PC-3 (cell line): ENCODE measurements at regions of chr11 and their contacts with region 1.

Region 1: DNA sequence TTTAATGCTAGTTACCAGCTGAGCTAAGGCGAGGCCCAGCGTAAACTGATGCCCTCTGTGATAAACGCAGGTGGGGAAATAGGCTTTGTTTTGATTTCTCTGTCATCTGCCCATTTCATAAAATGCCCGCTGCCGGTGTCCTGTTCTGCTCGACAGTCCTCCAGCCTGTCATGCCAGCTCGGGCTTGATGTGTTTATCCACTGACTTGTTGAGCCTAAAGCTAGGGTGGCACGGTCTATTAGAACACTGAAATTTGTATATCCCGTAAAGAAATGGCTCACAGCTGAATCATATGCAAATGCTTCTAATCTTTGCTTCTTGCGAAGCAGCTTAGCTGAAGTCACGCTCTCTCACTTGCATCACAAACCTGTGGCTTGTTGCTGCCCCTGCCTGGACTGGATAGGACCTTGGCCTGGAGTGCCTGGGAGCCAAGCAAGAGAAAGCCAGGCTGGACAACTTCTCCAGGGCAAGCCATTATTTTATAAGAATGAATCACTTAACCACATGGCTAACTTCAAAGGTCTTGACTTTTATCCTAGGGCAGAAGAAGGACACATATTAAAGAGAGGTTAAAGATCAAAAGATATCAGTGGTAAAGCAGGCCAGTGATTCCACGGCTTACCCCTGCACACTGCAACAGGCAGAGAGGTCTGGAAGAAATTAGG is 33.1 kb downstream of the EHF start:
- DNase-seq: peak; percentile 97
- ATAC-seq: peak; percentile 86
- H3K4me3 ChIP-seq: peak overlapping the region; percentile 3; the same call in 1 of the 2 replicates
- H3K27ac ChIP-seq: peak overlapping the region; percentile 99
- H3K4me1 ChIP-seq: peaks cover 52% of the 10 kb centered on the region
- H3K27me3 ChIP-seq: no peaks in the 10 kb centered on the region
- CTCF ChIP-seq: peak; percentile 49; the same call in 1 of the 2 replicates

Region 2: GRCh38 chr11:34585735-34586487 is 68.0 kb before region 1 on chr11:
- CTCF ChIA-PET with region 1: interaction called, 4 read pairs
- POLR2A ChIA-PET with region 1: interaction called, 5 read pairs
- intact Hi-C with region 1: loop called (anchors 1 kb)
- DNase-seq: peak; percentile 84
- ATAC-seq: peak; percentile 64
- H3K4me3 ChIP-seq: peak overlapping the region; percentile 19; the same call in 1 of the 2 replicates
- H3K27ac ChIP-seq: peak overlapping the region; percentile 60
- H3K4me1 ChIP-seq: peaks cover 25% of the 10 kb centered on the region
- H3K27me3 ChIP-seq: no peaks in the 10 kb centered on the region
- CTCF ChIP-seq: peak; percentile 83

Region 3: DNA sequence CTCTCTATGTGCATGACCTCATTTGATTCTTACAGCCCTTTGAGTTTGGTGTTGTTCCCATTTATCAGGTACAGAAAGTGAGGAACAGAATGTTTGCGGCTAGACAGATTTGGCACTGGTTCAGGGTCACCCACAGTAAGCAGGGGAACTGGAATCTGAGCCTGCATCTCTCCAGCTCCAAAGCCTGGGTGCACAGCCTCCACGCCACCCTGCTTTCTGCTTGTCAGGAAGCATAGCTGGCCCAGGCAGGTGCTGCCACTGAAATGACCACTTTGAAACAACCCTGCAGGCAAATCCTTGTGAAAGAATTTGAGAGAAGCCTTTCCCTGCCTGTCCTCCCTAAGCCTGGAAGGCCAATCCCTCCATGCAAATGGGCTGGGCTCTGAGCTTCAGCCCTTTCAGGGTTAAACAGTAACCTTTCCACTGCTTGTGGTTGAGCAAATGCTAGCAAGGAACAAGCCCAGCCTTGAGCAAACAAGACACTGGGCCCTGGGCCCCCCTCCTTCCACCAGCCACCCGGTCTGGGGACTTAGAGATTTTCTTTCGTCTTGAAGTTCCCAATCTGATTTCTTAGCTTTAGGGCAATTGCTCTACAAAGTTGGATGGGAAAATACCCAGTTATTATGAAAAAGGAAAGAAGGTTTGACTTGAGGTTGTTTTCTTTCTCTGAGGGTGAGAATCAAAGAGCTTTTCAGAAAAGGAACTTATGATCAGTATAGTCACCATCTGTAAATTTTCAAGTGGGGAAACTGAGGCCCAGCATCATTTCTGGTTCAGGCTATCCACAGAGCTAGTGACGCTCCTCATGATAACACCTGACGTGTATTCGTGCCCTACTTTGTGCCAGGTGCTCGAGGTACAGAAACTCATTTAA is 13.7 kb before region 1 on chr11:
- CTCF ChIA-PET with region 1: interaction called, 9 read pairs
- POLR2A ChIA-PET with region 1: interaction called, 16 read pairs
- intact Hi-C with region 1: loop called (anchors 1 kb)
- DNase-seq: peak; percentile 95
- ATAC-seq: peak; percentile 85
- H3K4me3 ChIP-seq: peak overlapping the region; percentile 20; the same call in 1 of the 2 replicates
- H3K27ac ChIP-seq: peak overlapping the region; percentile 97
- H3K4me1 ChIP-seq: peaks cover 70% of the 10 kb centered on the region
- H3K27me3 ChIP-seq: no peaks in the 10 kb centered on the region
- CTCF ChIP-seq: no peak

Region 4: DNA sequence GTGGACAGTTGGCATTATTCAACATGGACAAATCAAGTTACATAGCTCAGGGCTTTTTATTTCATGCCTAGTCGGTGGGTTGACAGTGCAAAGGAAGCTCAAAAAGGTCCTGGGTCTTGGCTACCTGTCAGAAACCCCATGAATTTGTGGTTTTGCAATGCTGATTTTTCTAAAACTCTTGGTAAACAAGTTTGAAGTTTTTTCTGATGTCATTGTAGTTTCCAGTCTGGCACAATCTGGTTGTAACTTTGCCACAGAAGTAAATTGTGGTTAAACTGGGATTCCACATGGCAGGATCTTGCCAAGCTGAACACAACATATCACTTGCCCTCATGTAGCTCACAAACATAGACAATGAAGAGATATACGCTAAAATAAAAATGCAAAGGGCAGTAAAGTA is 67.7 kb after region 1 on chr11:
- CTCF ChIA-PET with region 1: no interaction called
- POLR2A ChIA-PET with region 1: no interaction called
- intact Hi-C with region 1: loop called (anchors 2 kb)
- DNase-seq: peak; percentile 2
- ATAC-seq: no peak
- H3K4me3 ChIP-seq: no peak overlapping the region
- H3K27ac ChIP-seq: no peak overlapping the region
- H3K4me1 ChIP-seq: peaks cover 4% of the 10 kb centered on the region; the same call in 1 of the 2 replicates
- H3K27me3 ChIP-seq: no peaks in the 10 kb centered on the region
- CTCF ChIP-seq: no peak

Region 5: DNA sequence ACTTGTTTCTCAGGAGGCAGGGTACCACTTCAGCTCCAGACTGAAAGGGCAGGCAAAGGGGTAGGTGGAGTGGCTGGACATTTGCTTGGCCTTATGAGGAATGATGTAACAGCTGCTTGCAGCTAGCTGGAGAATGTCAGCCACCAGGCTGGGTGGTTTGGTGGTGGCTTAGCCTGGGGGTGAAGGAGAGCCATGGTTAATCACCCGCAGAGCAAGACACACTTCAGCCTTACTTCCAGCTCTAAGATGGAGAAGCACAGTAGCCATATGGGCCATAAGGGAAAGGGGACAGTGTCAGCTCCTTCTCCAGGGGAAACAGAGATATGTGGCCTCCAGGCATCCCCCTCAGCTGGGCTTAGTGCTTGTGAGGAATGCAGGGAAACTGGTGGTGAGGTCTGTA is 116.2 kb after region 1 on chr11:
- CTCF ChIA-PET with region 1: no interaction called
- POLR2A ChIA-PET with region 1: no interaction called
- intact Hi-C with region 1: no loop called
- DNase-seq: no peak
- ATAC-seq: no peak
- H3K4me3 ChIP-seq: no peak overlapping the region
- H3K27ac ChIP-seq: no peak overlapping the region
- H3K4me1 ChIP-seq: peaks cover 21% of the 10 kb centered on the region
- H3K27me3 ChIP-seq: no peaks in the 10 kb centered on the region
- CTCF ChIP-seq: no peak

Region 6: DNA sequence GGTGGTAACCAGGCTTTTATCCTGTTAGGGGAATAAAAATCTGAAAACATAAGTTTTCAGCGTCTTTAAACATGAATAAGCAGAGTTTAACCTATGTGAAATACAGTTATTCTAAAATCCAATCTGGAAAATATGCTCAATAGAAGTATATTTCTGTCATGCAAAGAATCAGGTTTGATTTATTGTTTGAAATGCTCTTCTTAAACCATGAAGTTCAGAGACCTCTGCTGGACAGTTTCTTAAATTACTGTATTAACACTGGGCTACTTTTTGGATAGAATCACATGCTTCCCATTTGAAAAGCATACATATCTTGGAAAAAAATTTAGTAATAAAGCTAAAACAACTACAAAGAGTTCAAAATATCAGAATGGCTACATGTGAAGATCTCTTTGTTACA is 236.9 kb after region 1 on chr11:
- CTCF ChIA-PET with region 1: interaction called, 6 read pairs
- POLR2A ChIA-PET with region 1: no interaction called
- intact Hi-C with region 1: loop called (anchors 1 kb)
- DNase-seq: peak; percentile 78
- ATAC-seq: peak; percentile 68; the same call in 1 of the 2 replicates
- H3K4me3 ChIP-seq: no peak overlapping the region
- H3K27ac ChIP-seq: peak overlapping the region; percentile 37
- H3K4me1 ChIP-seq: peaks cover 17% of the 10 kb centered on the region
- H3K27me3 ChIP-seq: no peaks in the 10 kb centered on the region
- CTCF ChIP-seq: peak; percentile 72

Region 7: DNA sequence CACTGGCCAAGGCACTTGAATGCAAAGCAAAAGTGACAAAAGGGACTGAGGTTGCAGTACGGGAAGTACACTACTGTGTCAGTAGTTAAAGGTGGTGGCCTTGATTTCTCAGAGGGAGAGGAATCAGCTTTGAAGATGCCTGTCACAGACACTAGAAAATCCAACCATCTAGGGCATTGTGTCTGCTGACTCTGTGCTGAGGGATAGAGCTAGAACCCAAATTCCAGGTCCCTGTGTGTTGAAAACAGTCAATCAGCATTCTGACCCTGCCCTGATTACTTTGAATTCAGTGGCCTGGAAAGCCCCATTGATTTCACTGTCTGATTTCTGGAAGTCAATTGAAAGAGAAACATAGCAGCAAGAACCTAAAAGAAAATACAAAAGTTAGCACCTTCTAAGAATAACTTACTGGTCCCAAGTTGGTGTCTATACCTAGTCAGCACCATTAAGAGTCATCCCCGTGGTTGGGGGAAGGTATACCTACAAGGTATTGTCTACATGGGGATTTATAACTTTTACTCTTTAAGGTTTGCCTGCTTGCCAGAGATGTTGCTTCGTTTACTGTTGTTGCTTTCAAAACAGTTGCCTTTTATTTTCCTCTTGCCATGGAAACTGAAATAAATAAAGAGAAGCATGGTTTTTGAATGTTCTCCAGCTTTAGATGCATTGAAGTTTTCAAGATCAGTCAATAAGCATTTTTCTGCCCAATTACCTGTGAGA is 359.7 kb after region 1 on chr11:
- CTCF ChIA-PET with region 1: no interaction called
- POLR2A ChIA-PET with region 1: no interaction called
- intact Hi-C with region 1: no loop called
- DNase-seq: no peak
- ATAC-seq: no peak
- H3K4me3 ChIP-seq: no peak overlapping the region
- H3K27ac ChIP-seq: no peak overlapping the region
- H3K4me1 ChIP-seq: peaks cover 38% of the 10 kb centered on the region
- H3K27me3 ChIP-seq: no peaks in the 10 kb centered on the region
- CTCF ChIP-seq: no peak